ENCODE measurements at regions of chr6 and their contacts with region 1.

Region 1: GRCh38 chr6:42260972-42261371 is 43.3 kb upstream of the MRPS10 start:
- DNase-seq: peak; percentile 68
- ATAC-seq: peak; percentile 77

Region 2: GRCh38 chr6:42532038-42532669 is 271.2 kb after region 1 on chr6:
- intact Hi-C with region 1: loop called (anchors 5 kb)
- DNase-seq: no peak
- ATAC-seq: peak; percentile 63

Region 3: GRCh38 chr6:42547407-42548329 is 286.7 kb after region 1 on chr6:
- intact Hi-C with region 1: loop called (anchors 5 kb)
- DNase-seq: peak; percentile 92
- ATAC-seq: peak; percentile 99

Region 4: GRCh38 chr6:42890311-42891198 is 629.6 kb after region 1 on chr6:
- intact Hi-C with region 1: no loop called
- DNase-seq: peak; percentile 96
- ATAC-seq: peak; percentile 98

Measured in Right ventricle myocardium superior (tissue), 1 donor.